AG04450 (cell line): ENCODE measurements at regions of chr1 and their contacts with region 1.

Region 1: GRCh38 chr1:6245086-6245868 is 1.3 kb downstream of the HES3 start:
- DNase-seq: peak; percentile 21
- H3K4me3 ChIP-seq: no peak overlapping the region
- H3K27ac ChIP-seq: no peak overlapping the region
- H3K27me3 ChIP-seq: peaks cover 61% of the 10 kb centered on the region
- CTCF ChIP-seq: peak; percentile 84

Region 2: GRCh38 chr1:6052543-6053205 is 192.6 kb before region 1 on chr1:
- CTCF ChIA-PET with region 1: interaction called, 19 read pairs
- POLR2A ChIA-PET with region 1: interaction called, 3 read pairs
- DNase-seq: peak; percentile 36
- H3K4me3 ChIP-seq: no peak overlapping the region
- H3K27ac ChIP-seq: no peak overlapping the region
- H3K27me3 ChIP-seq: peaks cover 2% of the 10 kb centered on the region
- CTCF ChIP-seq: peak; percentile 56

Region 3: GRCh38 chr1:6343506-6344405 is 98.5 kb after region 1 on chr1:
- CTCF ChIA-PET with region 1: interaction called, 266 read pairs
- POLR2A ChIA-PET with region 1: no interaction called
- DNase-seq: peak; percentile 47
- H3K4me3 ChIP-seq: no peak overlapping the region
- H3K27ac ChIP-seq: no peak overlapping the region
- H3K27me3 ChIP-seq: no peaks in the 10 kb centered on the region
- CTCF ChIP-seq: peak; percentile 98

Region 4: DNA sequence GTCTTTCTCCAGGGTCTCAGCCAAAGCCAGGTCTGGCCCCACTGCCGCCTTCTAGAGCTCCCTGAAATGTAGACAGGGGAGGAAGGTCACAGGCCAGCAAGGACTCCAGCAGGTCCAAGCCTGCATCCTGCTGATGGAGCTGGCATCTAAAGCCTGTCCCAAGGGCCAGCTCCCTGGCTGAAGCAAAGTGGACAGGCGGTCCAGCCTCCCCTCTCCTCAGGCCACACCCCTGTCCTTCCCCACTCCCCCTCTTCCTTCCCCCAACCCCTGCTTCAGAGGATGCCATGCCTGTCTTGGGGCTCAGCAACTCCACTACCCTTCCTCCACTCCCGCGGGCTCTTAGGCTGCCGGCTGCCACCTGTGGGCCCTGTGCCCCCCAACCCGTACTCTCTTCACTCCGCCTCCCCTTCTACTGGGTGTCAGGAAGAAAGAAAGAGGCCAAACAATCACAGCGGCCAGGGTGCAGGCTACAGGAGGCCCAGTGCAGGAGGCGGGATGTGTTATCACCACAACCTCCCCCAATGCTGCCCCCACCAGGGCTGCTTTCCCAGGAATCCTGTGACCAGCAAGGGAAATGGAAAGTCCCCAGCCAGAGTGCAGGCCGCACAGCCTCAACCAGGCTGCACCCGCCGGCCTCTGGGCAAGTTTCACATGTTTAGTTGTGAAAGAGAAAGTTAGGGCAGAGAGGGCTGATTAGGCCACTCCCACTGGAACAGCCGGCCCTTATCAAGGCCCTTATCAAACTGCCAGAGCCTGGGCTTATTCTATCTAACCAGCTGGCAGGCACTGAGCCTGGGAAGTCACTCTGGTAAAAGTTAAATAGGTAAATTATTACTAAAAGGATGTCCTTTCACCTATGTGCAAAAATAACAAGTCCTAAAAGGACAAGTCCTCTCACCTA is 114.2 kb after region 1 on chr1:
- CTCF ChIA-PET with region 1: interaction called, 18 read pairs
- POLR2A ChIA-PET with region 1: no interaction called
- DNase-seq: peak; percentile 47
- H3K4me3 ChIP-seq: peak overlapping the region; percentile 7
- H3K27ac ChIP-seq: peak overlapping the region; percentile 89
- H3K27me3 ChIP-seq: no peaks in the 10 kb centered on the region
- CTCF ChIP-seq: no peak

Region 5: DNA sequence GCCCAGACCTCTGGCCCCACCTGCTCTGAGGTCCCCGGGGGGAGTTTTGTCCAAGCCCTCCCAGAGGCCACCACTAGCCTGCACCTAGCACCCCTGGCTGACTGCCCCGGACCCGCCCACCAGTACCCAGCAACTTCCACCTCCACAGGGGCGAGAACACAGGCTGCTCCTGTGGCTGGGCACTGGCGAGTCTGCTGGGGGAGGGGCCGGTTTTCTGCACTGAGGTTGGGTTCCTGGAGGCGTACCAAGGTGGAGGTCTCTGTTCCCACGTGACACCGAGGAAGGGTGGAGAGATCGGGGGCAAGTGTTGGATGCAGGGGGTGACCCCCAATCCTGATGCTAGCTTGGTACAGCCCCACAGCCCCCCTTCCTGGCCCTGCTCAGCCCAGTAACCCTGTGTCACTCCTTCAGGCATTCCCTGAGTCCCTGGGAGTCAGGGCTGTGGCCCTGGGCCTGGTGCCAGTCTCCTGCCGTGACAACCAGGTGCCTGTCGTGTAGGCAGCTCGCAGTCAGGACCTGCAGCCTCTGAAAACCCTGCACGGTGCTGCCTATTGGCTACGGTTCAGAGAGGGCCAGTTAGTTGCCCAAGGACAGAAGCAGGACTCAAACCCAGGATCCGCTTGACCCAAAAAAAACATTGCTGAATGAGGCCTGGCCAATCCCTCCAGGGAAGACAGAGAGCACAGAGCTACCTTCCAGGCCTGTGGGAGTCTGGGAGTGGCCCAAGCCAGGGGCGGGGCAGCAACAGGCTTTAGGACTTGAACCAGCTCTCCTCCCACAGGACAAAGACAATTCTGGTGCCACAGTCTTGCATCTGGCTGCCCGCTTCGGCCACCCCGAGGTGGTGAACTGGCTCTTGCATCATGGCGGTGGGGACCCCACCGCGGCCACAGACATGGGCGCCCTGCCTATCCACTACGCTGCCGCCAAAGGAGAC is 182.4 kb after region 1 on chr1:
- CTCF ChIA-PET with region 1: interaction called, 12 read pairs
- POLR2A ChIA-PET with region 1: no interaction called
- DNase-seq: no peak
- H3K4me3 ChIP-seq: no peak overlapping the region
- H3K27ac ChIP-seq: no peak overlapping the region
- H3K27me3 ChIP-seq: peaks cover 58% of the 10 kb centered on the region
- CTCF ChIP-seq: no peak